Sigmoid colon (tissue), 7 donors: ENCODE measurements at regions of chr6 and their contacts with region 1.

Region 1: DNA sequence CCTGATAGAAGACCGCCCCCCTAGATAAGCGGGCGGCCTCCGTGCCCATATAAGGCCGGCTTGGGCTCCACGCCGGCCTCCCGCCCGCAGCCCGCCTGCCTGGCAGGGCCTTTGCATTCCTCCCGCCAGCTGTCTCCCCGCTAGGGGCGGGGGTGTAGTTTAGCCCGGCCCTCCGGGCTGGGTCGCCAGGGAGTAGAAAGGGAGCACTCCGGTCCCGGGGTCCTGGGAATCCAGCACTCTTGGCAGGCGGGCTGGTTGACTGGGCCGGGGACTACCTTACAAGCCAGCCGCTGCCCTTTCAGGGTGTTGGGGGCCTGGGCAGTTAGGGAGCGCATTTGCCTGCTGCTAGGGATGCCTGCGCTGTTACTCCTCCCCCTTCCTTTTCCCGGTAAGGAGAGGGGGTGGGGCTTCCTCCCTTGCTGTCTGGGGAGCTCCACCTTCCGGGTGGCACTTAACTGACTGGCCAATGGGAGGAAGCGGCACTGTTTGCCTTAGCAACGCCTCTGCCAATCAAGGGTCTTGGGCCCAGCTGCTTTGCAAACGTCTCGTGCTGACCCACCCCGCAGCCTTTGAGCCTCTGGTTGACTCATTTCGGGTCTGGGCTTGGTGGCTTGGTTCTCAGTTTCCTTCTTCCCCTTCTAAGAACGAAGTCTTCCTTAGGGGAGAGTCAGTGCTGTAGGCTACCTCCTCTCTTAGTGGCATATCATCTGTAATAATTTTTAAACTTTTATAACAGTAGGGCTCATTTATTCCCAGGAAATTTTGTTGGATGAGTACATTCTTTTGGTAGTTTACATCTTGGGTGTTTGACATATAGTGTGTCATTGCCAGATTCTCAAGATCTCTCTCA is 3.4 kb downstream of the SRF start:
- DNase-seq: peak; percentile 99
- H3K4me3 ChIP-seq: peak overlapping the region; percentile 88 to 98 (median 95)
- H3K27ac ChIP-seq: peak overlapping the region; percentile 99 to 100 (median 100)
- H3K4me1 ChIP-seq: peaks cover 0 to 52% (median 49%) of the 10 kb centered on the region in 4 donors
- H3K27me3 ChIP-seq: no peaks in the 10 kb centered on the region
- CTCF ChIP-seq: no peak
- EP300 ChIP-seq: peak in 2 of 4 donors; percentile 24 to 33
- POLR2A ChIP-seq: peak in 1 of 2 donors; percentile 63

Region 2: GRCh38 chr6:42782622-42783176 is 391.8 kb before region 1 on chr6:
- intact Hi-C with region 1: loop called (anchors 5 kb)
- DNase-seq: peak; percentile 90
- H3K4me3 ChIP-seq: peak overlapping the region; percentile 80 to 98 (median 90)
- H3K27ac ChIP-seq: peak overlapping the region; percentile 96 to 100 (median 100)
- H3K4me1 ChIP-seq: peaks cover 0 to 44% (median 38%) of the 10 kb centered on the region in 4 donors
- H3K27me3 ChIP-seq: no peaks in the 10 kb centered on the region
- CTCF ChIP-seq: no peak
- EP300 ChIP-seq: no peak
- POLR2A ChIP-seq: peak; percentile 70 to 78

Region 3: GRCh38 chr6:43059168-43060033 is 115.1 kb before region 1 on chr6 and contains the starts of genes KLC4 and MRPL2:
- intact Hi-C with region 1: loop called (anchors 5 kb)
- DNase-seq: peak; percentile 99
- H3K4me3 ChIP-seq: peak within 1 kb of the TSS; percentile 74 to 97 (median 87)
- H3K27ac ChIP-seq: peak within 1 kb of the TSS; percentile 84 to 93 (median 90)
- H3K4me1 ChIP-seq: peaks cover 0 to 36% (median 23%) of the 10 kb centered on the region in 4 donors
- H3K27me3 ChIP-seq: no peaks in the 10 kb centered on the region
- CTCF ChIP-seq: no peak
- EP300 ChIP-seq: peak in 1 of 4 donors; percentile 61
- POLR2A ChIP-seq: peak; percentile 83 to 87
- total RNA-seq, gene KLC4: 23.2 to 44.9 (median 34.6) TPM
- total RNA-seq, gene MRPL2: 14.1 to 25.7 (median 18.3) TPM

Region 4: GRCh38 chr6:43105538-43106220 is 68.8 kb before region 1 on chr6:
- intact Hi-C with region 1: no loop called
- DNase-seq: peak; percentile 22
- H3K4me3 ChIP-seq: no peak overlapping the region
- H3K27ac ChIP-seq: no peak overlapping the region
- H3K4me1 ChIP-seq: no peaks in the 10 kb centered on the region
- H3K27me3 ChIP-seq: no peaks in the 10 kb centered on the region
- CTCF ChIP-seq: no peak
- EP300 ChIP-seq: no peak
- POLR2A ChIP-seq: no peak

Region 5: GRCh38 chr6:43369174-43370022 is 194.9 kb after region 1 on chr6 and contains the start of gene ZNF318:
- intact Hi-C with region 1: no loop called
- DNase-seq: peak; percentile 98
- H3K4me3 ChIP-seq: peak within 1 kb of the TSS; percentile 70 to 94 (median 87)
- H3K27ac ChIP-seq: peak within 1 kb of the TSS; percentile 84 to 95 (median 92)
- H3K4me1 ChIP-seq: peaks cover 0 to 33% (median 23%) of the 10 kb centered on the region in 4 donors
- H3K27me3 ChIP-seq: no peaks in the 10 kb centered on the region
- CTCF ChIP-seq: no peak
- EP300 ChIP-seq: peak in 1 of 4 donors; percentile 45
- POLR2A ChIP-seq: no peak
- total RNA-seq, gene ZNF318: 11.7 to 19.1 (median 15.1) TPM

Region 6: DNA sequence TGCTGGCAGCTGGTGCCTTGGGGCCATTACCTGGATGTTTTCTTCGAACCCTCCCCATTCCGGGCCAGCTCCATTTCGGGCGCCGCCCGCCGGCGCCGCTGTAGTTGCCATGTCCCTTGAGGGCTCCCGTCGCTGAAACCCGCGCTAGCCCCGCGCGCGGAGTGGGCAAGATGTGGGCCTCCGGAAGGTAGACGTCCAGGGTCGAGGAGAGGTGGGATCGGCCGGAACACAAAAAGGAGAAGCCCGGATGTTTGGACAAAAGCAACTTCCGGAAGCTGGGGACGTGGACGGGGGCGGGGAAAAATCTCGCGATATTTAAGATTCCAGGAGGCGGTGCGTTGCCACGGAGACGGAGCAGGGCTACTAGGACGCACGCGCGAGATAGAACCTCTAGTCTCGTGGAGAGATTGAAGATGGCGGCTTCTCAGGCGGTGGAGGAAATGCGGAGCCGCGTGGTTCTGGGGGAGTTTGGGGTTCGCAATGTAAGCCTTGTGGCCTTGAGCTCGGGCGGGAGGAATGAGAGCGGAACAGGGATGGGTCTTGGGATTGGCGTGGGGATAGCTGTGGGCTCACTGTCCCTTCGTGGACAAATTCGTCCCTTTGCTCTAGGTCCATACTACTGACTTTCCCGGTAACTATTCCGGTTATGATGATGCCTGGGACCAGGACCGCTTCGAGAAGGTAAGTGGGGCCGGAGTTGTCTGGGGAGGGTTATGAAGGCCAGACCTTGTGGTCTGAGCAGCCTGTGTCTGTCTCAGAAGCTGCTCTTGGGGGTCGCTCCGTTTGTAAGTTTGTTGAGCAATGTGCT is 342.4 kb after region 1 on chr6 and contains the starts of genes POLR1C and YIPF3:
- intact Hi-C with region 1: loop called (anchors 10 kb)
- DNase-seq: peak; percentile 99
- H3K4me3 ChIP-seq: peak within 1 kb of the TSS; percentile 73 to 94 (median 79)
- H3K27ac ChIP-seq: peak within 1 kb of the TSS; percentile 84 to 91 (median 85)
- H3K4me1 ChIP-seq: peaks cover 0 to 41% (median 35%) of the 10 kb centered on the region in 4 donors
- H3K27me3 ChIP-seq: no peaks in the 10 kb centered on the region
- CTCF ChIP-seq: no peak
- EP300 ChIP-seq: no peak
- POLR2A ChIP-seq: peak in 1 of 2 donors; percentile 45
- total RNA-seq, gene POLR1C: 11.9 to 25.5 (median 19.1) TPM
- total RNA-seq, gene YIPF3: 58.4 to 74.2 (median 66.0) TPM

Region 7: DNA sequence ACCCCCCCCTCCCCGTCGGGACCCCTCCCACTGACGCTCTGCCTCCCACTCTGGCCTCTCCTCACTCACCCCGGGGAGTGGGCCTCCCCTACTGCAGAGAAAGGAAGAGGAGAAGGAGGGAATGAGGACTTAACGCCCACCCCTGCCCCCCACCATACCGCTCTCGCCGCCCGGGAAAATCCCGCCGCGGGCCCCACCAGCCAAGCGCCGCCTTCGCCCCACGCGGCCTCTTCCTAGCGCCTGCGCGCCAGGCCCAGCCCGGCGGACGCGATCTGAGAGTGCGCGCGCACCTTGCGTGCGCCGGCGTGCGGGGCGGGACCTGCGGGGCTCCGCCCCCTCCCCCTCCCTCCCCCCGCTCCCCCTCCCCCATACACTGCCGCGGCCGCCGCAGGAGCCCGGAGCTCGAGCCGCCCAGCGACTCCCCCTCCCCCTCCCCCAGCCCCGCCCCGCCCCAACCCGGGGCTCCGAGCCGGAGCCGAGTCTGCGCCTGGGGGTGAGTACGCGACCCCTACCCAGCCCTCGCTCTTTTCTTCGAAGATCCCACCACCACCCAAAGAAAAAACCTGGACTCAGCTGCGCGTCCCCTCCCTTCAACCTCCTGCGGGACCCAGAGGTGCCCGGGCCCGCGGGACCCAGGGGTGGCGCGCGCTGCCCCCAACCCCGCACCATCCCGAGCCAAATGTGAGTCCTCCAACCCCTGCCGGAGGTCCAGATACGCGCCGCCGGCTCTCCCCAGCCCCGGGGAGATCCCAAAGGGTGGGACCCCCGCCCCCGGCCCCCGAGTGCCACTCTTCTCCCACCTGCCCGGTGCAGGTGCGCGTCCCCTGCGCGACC is 952.9 kb after region 1 on chr6 and contains the starts of genes MRPL14 and TMEM63B:
- intact Hi-C with region 1: loop called (anchors 5 kb)
- DNase-seq: peak; percentile 94
- H3K4me3 ChIP-seq: peak within 1 kb of the TSS; percentile 89 to 100 (median 98)
- H3K27ac ChIP-seq: peak within 1 kb of the TSS; percentile 89 to 98 (median 94)
- H3K4me1 ChIP-seq: peaks cover 0 to 51% (median 50%) of the 10 kb centered on the region in 4 donors
- H3K27me3 ChIP-seq: no peaks in the 10 kb centered on the region
- CTCF ChIP-seq: no peak
- EP300 ChIP-seq: no peak
- POLR2A ChIP-seq: peak; percentile 65 to 67
- total RNA-seq, gene MRPL14: 32.4 to 55.8 (median 45.3) TPM
- total RNA-seq, gene TMEM63B: 10.0 to 21.3 (median 16.3) TPM